ENCODE measurements at regions of chr12 and their contacts with region 1.

Region 1: DNA sequence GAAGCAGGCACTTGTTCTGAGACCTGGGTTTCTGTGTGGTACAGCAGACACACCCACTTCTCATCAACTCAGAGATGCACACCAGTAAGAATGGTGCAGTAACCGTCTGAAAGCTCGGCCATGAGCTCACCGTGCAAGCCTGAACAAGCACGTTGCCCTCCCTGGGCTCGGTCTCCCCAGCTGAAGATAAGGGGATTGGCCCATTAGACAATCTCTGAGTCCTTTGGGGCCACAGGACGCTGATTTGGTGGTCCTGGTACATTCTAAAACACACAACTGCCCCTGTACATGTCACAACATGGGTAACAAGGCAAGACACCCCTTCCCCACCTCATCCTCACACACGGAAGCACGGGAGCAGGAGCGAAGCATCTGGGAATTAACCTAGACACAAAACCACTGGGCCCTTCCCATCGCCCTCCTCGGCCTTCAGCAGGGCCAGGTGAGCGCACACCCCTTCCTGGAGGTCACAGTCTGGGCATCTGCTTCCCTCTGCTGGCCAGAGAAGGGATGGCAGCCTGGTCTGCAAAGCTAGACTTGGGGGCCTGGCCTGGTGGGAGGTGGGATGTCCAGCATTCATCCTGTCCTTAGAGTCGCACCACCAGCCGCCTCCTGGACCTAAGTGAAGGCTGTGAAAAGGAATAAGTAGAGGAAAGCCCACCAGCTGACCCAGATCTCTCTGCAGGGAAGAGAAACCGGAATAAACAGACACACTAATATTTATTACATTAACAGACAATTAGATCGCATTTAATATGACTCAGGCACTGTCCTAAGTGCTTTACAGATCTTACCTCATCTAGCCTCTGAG is 18.9 kb upstream of the SMUG1 start:
- H3K4me3 ChIP-seq: no peak overlapping the region
- H3K27ac ChIP-seq: 0 out of 2 replicates have a peak overlapping the region, but pooled peaks have one; percentile 13
- H3K4me1 ChIP-seq: no peaks in the 10 kb centered on the region
- CTCF ChIP-seq: peak; percentile 89

Region 2: GRCh38 chr12:53984901-53985709 is 222.6 kb before region 1 on chr12 and contains the start of gene HOXC10:
- CTCF ChIA-PET with region 1: interaction called, 88 read pairs
- POLR2A ChIA-PET with region 1: no interaction called
- H3K4me3 ChIP-seq: peak within 1 kb of the TSS; percentile 32
- H3K27ac ChIP-seq: peak within 1 kb of the TSS; percentile 90
- H3K4me1 ChIP-seq: peaks cover 25% of the 10 kb centered on the region
- CTCF ChIP-seq: peak; percentile 81

Region 3: DNA sequence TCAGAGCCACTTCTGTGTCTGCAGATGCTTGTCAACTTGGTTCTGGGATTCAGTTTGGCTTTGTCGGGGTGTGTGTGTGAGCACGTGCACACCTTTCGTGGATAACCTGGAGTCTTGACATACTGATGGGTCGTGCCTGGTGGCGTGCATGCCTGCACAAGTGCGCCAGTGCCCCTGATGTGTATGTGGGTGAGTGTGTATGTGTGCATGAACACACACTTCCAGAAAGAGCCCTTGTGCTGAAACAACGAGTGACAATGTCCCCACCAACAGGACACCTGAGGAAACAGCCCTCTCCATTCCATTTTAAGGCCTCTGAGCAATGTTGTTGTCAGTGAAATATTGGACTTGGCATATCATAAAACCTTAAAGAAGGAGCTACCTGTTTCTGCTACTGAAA is 72.8 kb before region 1 on chr12:
- CTCF ChIA-PET with region 1: interaction called, 26 read pairs
- POLR2A ChIA-PET with region 1: interaction called, 6 read pairs
- H3K4me3 ChIP-seq: no peak overlapping the region
- H3K27ac ChIP-seq: peak overlapping the region; percentile 17; the same call in 1 of the 2 replicates
- H3K4me1 ChIP-seq: peaks cover 12% of the 10 kb centered on the region
- CTCF ChIP-seq: peak; percentile 70

Region 4: GRCh38 chr12:54140588-54141388 is 66.9 kb before region 1 on chr12:
- CTCF ChIA-PET with region 1: interaction called, 26 read pairs
- POLR2A ChIA-PET with region 1: no interaction called
- H3K4me3 ChIP-seq: no peak overlapping the region
- H3K27ac ChIP-seq: no peak overlapping the region
- H3K4me1 ChIP-seq: peaks cover 2% of the 10 kb centered on the region
- CTCF ChIP-seq: no peak

Region 5: GRCh38 chr12:54306925-54307741 is 99.4 kb after region 1 on chr12:
- CTCF ChIA-PET with region 1: no interaction called
- POLR2A ChIA-PET with region 1: no interaction called
- H3K4me3 ChIP-seq: no peak overlapping the region
- H3K27ac ChIP-seq: no peak overlapping the region
- H3K4me1 ChIP-seq: peaks cover 8% of the 10 kb centered on the region
- CTCF ChIP-seq: no peak

Measured in HEK293 (cell line).